Heart right ventricle (tissue), 16 donors: ENCODE measurements at regions of chr17 and their contacts with region 1.

Region 1: GRCh38 chr17:71995590-71995989 is 125.2 kb upstream of the SOX9 start:
- DNase-seq: no peak
- ATAC-seq: no peak
- H3K4me3 ChIP-seq: no peak overlapping the region
- H3K27ac ChIP-seq: no peak overlapping the region
- H3K4me1 ChIP-seq: no peaks in the 10 kb centered on the region
- H3K27me3 ChIP-seq: peaks cover 0 to 7% (median 0%) of the 10 kb centered on the region in 7 donors
- CTCF ChIP-seq: no peak

Region 2: DNA sequence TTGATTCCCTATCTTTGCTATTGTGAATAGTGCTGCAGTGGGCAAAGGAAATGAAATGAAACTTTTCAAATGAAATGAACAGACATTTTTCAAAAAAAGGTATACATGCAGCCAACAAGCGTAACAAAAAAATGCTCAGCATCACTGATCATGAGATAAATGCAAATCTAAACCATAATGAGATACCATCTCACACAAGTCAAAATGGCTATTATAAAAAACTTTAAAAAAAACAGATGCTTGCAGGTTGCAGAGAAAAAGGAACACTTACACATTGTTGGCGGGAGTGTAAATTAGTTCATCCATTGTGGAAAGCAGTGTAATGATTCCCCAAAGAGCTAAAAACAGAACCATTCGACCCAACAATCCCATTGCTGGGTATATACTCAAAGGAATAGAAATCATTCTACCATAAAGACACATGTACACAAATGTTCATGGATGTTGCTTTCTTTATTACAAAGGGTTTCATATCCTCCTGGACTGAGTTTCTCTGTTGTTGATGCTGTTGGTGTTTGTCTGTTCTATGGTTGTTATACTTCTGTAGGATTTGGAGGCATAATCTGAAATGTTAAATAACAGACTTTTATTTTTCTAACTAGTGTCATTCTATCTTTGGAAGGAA is 25.9 kb after region 1 on chr17:
- intact Hi-C with region 1: no loop called
- DNase-seq: no peak
- ATAC-seq: no peak
- H3K4me3 ChIP-seq: no peak overlapping the region
- H3K27ac ChIP-seq: no peak overlapping the region
- H3K4me1 ChIP-seq: no peaks in the 10 kb centered on the region
- H3K27me3 ChIP-seq: peaks cover 0 to 35% (median 13%) of the 10 kb centered on the region in 7 donors
- CTCF ChIP-seq: no peak

Region 3: DNA sequence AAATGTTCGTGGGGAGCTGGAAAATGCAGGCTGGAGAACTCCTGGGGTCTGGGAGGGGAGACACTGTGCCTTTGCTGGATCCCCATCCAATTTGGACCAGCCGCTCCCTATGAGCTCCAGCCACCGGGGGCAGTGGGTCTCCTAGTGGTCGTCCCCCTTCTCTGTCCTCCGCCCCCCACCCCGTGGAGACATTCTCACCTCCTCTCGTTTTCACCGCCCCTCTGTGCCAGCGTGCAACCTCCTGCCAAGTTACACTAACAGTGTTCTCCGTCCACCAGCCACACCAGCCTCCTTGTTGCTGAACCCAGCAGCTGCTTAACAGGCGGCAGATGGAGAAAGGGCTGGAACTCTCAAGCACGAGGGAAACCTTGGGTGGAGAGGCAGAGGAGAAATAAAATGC is 57.9 kb after region 1 on chr17:
- intact Hi-C with region 1: loop called in 1 of 10 experiments (anchors 10 kb)
- DNase-seq: no peak
- ATAC-seq: no peak
- H3K4me3 ChIP-seq: peak overlapping the region in 2 of 10 donors; percentile 9 to 22
- H3K27ac ChIP-seq: no peak overlapping the region
- H3K4me1 ChIP-seq: no peaks in the 10 kb centered on the region
- H3K27me3 ChIP-seq: peaks cover 0 to 27% (median 7%) of the 10 kb centered on the region in 7 donors
- CTCF ChIP-seq: no peak

Region 4: GRCh38 chr17:72839131-72839725 is 843.6 kb after region 1 on chr17:
- intact Hi-C with region 1: no loop called
- DNase-seq: peak in 1 of 2 donors; percentile 4
- ATAC-seq: no peak
- H3K4me3 ChIP-seq: no peak overlapping the region
- H3K27ac ChIP-seq: no peak overlapping the region
- H3K4me1 ChIP-seq: peaks cover 0 to 5% (median 0%) of the 10 kb centered on the region in 9 donors
- H3K27me3 ChIP-seq: no peaks in the 10 kb centered on the region
- CTCF ChIP-seq: no peak